ENCODE measurements at regions of chr4 and their contacts with region 1.

Region 1: GRCh38 chr4:183797445-183798300 is 107.4 kb upstream of the STOX2 start:
- DNase-seq: peak; percentile 41 to 57
- H3K4me3 ChIP-seq: peak overlapping the region; percentile 53
- H3K4me3 Mint-ChIP-seq: peak overlapping the region; percentile 72
- H3K27ac Mint-ChIP-seq: no peak overlapping the region
- H3K4me1 ChIP-seq: no peaks in the 10 kb centered on the region
- H3K4me1 Mint-ChIP-seq: no peaks in the 10 kb centered on the region
- H3K27me3 ChIP-seq: no peaks in the 10 kb centered on the region; the same call in 1 of the 2 replicates
- H3K27me3 Mint-ChIP-seq: peaks cover 6% of the 10 kb centered on the region
- CTCF ChIP-seq: no peak

Region 2: DNA sequence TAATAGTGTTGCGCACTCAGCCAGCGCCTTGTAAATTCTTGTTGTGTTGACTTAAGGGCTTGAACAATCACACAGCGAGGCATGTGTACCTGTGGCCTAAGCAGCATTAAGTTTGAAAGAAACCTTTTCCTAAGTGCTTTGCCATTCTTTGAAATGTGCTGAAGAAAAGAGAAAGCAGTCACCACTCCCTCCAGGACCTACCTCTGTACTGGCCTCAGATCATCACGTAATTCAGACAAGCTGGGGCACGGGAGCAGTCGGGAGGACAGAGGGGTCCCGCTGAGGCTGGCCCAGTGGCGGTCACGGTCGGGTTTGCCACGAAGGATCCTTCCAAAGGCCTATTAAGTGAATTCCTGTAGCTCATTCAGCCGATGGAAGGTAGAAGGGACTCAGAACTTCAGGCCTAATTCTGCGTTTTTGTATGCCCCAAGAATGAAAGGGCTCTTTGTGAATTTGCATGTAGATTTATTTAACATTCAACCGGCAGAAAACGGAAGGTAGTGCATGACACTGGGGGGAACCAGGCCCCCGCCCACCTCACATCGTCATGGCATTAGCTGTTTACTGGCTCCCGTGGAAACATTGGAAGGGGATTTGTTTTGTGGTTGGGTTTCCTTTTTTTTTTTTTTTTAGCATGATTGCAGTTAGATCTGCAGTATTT is 32.3 kb before region 1 on chr4:
- CTCF ChIA-PET with region 1: no interaction called
- POLR2A ChIA-PET with region 1: no interaction called
- intact Hi-C with region 1: loop called (anchors 1 kb)
- DNase-seq: peak in 1 of 2 experiments; percentile 46
- H3K4me3 ChIP-seq: no peak overlapping the region
- H3K4me3 Mint-ChIP-seq: no peak overlapping the region
- H3K27ac Mint-ChIP-seq: peak overlapping the region; percentile 61
- H3K4me1 ChIP-seq: peaks cover 10% of the 10 kb centered on the region
- H3K4me1 Mint-ChIP-seq: no peaks in the 10 kb centered on the region
- H3K27me3 ChIP-seq: no peaks in the 10 kb centered on the region
- H3K27me3 Mint-ChIP-seq: no peaks in the 10 kb centered on the region
- CTCF ChIP-seq: no peak

Region 3: DNA sequence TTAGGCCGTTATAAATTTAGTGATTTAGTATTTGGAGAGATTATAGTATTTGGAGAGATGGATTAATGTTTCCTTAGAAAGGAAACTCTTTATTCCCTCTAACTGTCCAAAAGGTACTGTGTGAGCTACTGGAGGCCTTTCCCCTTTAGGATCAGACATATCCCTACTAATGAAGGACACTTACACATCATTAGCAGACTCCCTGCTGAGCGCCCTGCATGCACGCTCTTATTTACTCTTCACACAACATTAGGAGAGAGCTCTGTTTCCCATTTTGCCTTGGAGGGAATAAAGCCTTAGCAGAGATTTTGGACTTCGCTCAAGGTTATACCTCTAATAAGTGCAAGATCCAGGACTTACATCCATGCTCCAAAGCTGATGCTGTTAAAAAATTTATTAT is 89.7 kb after region 1 on chr4:
- CTCF ChIA-PET with region 1: no interaction called
- POLR2A ChIA-PET with region 1: no interaction called
- intact Hi-C with region 1: no loop called
- DNase-seq: no peak
- H3K4me3 ChIP-seq: no peak overlapping the region
- H3K4me3 Mint-ChIP-seq: no peak overlapping the region
- H3K27ac Mint-ChIP-seq: no peak overlapping the region
- H3K4me1 ChIP-seq: no peaks in the 10 kb centered on the region
- H3K4me1 Mint-ChIP-seq: no peaks in the 10 kb centered on the region
- H3K27me3 ChIP-seq: no peaks in the 10 kb centered on the region
- H3K27me3 Mint-ChIP-seq: peaks cover 3% of the 10 kb centered on the region
- CTCF ChIP-seq: no peak

Region 4: GRCh38 chr4:183960046-183960420 is 162.4 kb after region 1 on chr4:
- CTCF ChIA-PET with region 1: no interaction called
- POLR2A ChIA-PET with region 1: no interaction called
- intact Hi-C with region 1: no loop called
- DNase-seq: peak; percentile 46 to 58
- H3K4me3 ChIP-seq: no peak overlapping the region
- H3K4me3 Mint-ChIP-seq: no peak overlapping the region
- H3K27ac Mint-ChIP-seq: no peak overlapping the region
- H3K4me1 ChIP-seq: 0 out of 2 replicates have a peak, but pooled peaks cover 2% of the 10 kb centered on the region
- H3K4me1 Mint-ChIP-seq: no peaks in the 10 kb centered on the region
- H3K27me3 ChIP-seq: no peaks in the 10 kb centered on the region; the same call in 1 of the 2 replicates
- H3K27me3 Mint-ChIP-seq: peaks cover 9% of the 10 kb centered on the region
- CTCF ChIP-seq: no peak

Region 5: GRCh38 chr4:183996868-183997267 is 199.2 kb after region 1 on chr4:
- CTCF ChIA-PET with region 1: no interaction called
- POLR2A ChIA-PET with region 1: no interaction called
- intact Hi-C with region 1: no loop called
- DNase-seq: no peak
- H3K4me3 ChIP-seq: no peak overlapping the region
- H3K4me3 Mint-ChIP-seq: no peak overlapping the region
- H3K27ac Mint-ChIP-seq: no peak overlapping the region
- H3K4me1 ChIP-seq: no peaks in the 10 kb centered on the region
- H3K4me1 Mint-ChIP-seq: no peaks in the 10 kb centered on the region
- H3K27me3 ChIP-seq: no peaks in the 10 kb centered on the region
- H3K27me3 Mint-ChIP-seq: peaks cover 16% of the 10 kb centered on the region
- CTCF ChIP-seq: no peak

Measured in Caco-2 (cell line).